Naive thymus-derived CD4-positive, alpha-beta T cell (primary cell): ENCODE measurements at regions of chr1 and their contacts with region 1.

Region 1: GRCh38 chr1:24481101-24481500 is 21.5 kb upstream of the RCAN3 start:
- DNase-seq: peak in 8 of 9 donors; percentile 50 to 80 (median 75)
- ATAC-seq: peak; percentile 84
- H3K4me3 ChIP-seq: peak overlapping the region; percentile 44
- H3K4me3 Mint-ChIP-seq: peak overlapping the region; percentile 74 to 95 (median 83)
- H3K27ac ChIP-seq: peak overlapping the region; percentile 83
- H3K27ac Mint-ChIP-seq: peak overlapping the region; percentile 93 to 99 (median 98)
- H3K4me1 ChIP-seq: peaks cover 49 to 59% of the 10 kb centered on the region in 2 donors
- H3K4me1 Mint-ChIP-seq: peaks cover 36 to 86% (median 77%) of the 10 kb centered on the region in 7 donors
- H3K27me3 ChIP-seq: no peaks in the 10 kb centered on the region
- H3K27me3 Mint-ChIP-seq: no peaks in the 10 kb centered on the region

Region 2: GRCh38 chr1:24463776-24464735 is 17.0 kb before region 1 on chr1:
- CTCF ChIA-PET with region 1: interaction called, 5 read pairs
- POLR2A ChIA-PET with region 1: interaction called, 19 read pairs
- intact Hi-C with region 1: loop called in 1 of 2 experiments (anchors 1 kb)
- DNase-seq: peak in 6 of 9 donors; percentile 12 to 37 (median 31)
- ATAC-seq: no peak
- H3K4me3 ChIP-seq: no peak overlapping the region
- H3K4me3 Mint-ChIP-seq: peak overlapping the region in 8 of 10 donors; percentile 63 to 75 (median 68)
- H3K27ac ChIP-seq: peak overlapping the region; percentile 45
- H3K27ac Mint-ChIP-seq: peak overlapping the region; percentile 58 to 95 (median 86)
- H3K4me1 ChIP-seq: peaks cover 0 to 15% of the 10 kb centered on the region in 2 donors
- H3K4me1 Mint-ChIP-seq: peaks cover 21 to 65% (median 50%) of the 10 kb centered on the region in 7 donors
- H3K27me3 ChIP-seq: no peaks in the 10 kb centered on the region
- H3K27me3 Mint-ChIP-seq: no peaks in the 10 kb centered on the region

Region 3: DNA sequence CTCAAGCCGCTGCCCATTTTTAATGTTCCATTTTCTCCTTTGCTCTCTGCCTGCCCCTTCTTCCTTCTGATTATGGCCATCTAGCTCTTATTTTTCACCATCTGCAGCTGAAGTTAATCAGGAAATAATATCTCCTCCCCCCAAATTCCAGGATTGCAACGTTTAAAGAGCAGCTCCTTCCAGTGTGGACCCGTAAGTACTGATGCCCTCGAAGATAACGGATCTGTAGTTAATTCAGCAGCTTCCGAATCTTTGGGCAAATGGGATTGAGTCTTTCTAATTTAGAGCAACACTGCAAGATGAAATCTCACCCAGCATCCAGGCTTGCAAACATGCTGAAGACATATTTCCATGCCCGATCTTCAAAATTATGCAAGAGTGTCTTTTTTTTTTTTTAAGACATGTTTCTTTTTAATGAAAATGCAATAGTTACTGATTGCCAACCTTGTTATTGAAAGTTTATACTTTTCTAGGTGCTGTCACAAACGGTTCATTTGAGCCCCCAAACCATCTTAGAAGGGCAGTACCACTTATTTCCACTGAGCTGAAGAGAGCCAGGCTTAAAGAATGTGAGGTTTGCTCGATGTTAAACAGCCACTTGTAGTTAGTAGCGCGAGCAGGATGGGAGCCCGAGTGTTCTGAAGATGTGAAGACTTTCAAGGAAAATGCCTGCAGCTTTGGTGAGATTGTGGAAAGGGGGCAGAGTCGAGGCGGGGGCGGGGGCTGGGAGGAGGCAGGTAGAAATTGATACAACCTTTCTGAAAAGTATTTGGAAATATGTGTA is 10.7 kb after region 1 on chr1:
- CTCF ChIA-PET with region 1: interaction called, 6 read pairs
- POLR2A ChIA-PET with region 1: interaction called, 929 read pairs
- intact Hi-C with region 1: loop called in 1 of 2 experiments (anchors 1 kb)
- DNase-seq: peak in 1 of 9 donors; percentile 21
- ATAC-seq: no peak
- H3K4me3 ChIP-seq: no peak overlapping the region
- H3K4me3 Mint-ChIP-seq: peak overlapping the region in 2 of 10 donors; percentile 6 to 18
- H3K27ac ChIP-seq: no peak overlapping the region
- H3K27ac Mint-ChIP-seq: peak overlapping the region in 8 of 9 donors; percentile 4 to 84 (median 48)
- H3K4me1 ChIP-seq: peaks cover 5 to 31% of the 10 kb centered on the region in 2 donors
- H3K4me1 Mint-ChIP-seq: peaks cover 23 to 53% (median 35%) of the 10 kb centered on the region in 7 donors
- H3K27me3 ChIP-seq: no peaks in the 10 kb centered on the region
- H3K27me3 Mint-ChIP-seq: peaks cover 0 to 3% (median 0%) of the 10 kb centered on the region in 5 donors

Region 4: DNA sequence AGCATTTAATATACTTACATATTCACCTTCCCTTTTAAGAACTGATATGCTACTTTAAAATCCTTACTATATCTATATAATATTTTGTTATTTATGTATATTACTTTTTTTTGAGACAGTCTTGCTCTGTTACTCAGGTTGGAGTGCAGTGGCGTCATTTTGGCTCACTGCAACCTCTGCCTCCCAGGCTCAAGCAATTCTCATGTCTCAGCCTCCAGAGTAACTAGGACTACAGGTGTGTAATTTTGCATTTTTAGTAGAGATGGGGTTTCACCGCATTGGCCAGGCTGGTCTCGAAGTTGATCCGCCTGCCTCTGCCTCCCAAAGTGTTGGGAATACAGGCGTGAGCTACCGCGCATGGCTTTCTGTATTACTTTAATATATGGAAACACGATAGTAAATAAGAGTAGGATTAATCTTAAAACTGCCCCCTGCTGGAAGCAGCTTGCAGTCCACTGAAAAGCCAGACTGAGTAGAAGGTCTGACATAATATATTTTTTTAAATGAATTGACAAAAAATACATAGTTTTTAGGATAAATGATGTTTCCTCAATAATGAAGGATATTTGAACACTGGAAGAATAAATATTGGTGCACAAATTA is 45.9 kb after region 1 on chr1:
- CTCF ChIA-PET with region 1: interaction called, 8 read pairs
- POLR2A ChIA-PET with region 1: interaction called, 39 read pairs
- intact Hi-C with region 1: loop called in 1 of 2 experiments (anchors 1 kb)
- DNase-seq: peak in 8 of 9 donors; percentile 28 to 66 (median 56)
- ATAC-seq: peak; percentile 69
- H3K4me3 ChIP-seq: no peak overlapping the region
- H3K4me3 Mint-ChIP-seq: peak overlapping the region in 7 of 10 donors; percentile 23 to 57 (median 39)
- H3K27ac ChIP-seq: peak overlapping the region; percentile 40
- H3K27ac Mint-ChIP-seq: peak overlapping the region in 8 of 9 donors; percentile 32 to 93 (median 84)
- H3K4me1 ChIP-seq: peaks cover 0 to 49% of the 10 kb centered on the region in 2 donors
- H3K4me1 Mint-ChIP-seq: peaks cover 31 to 86% (median 71%) of the 10 kb centered on the region in 7 donors
- H3K27me3 ChIP-seq: no peaks in the 10 kb centered on the region
- H3K27me3 Mint-ChIP-seq: no peaks in the 10 kb centered on the region

Region 5: GRCh38 chr1:24536391-24536840 is 55.3 kb after region 1 on chr1:
- CTCF ChIA-PET with region 1: interaction called, 3 read pairs
- POLR2A ChIA-PET with region 1: interaction called, 8 read pairs
- intact Hi-C with region 1: loop called (anchors 1 to 2 kb)
- DNase-seq: peak; percentile 41 to 92 (median 87)
- ATAC-seq: peak; percentile 90
- H3K4me3 ChIP-seq: no peak overlapping the region
- H3K4me3 Mint-ChIP-seq: peak overlapping the region; percentile 79 to 91 (median 84)
- H3K27ac ChIP-seq: peak overlapping the region; percentile 96
- H3K27ac Mint-ChIP-seq: peak overlapping the region; percentile 93 to 100 (median 99)
- H3K4me1 ChIP-seq: peaks cover 30 to 38% of the 10 kb centered on the region in 2 donors
- H3K4me1 Mint-ChIP-seq: peaks cover 29 to 90% (median 70%) of the 10 kb centered on the region in 7 donors
- H3K27me3 ChIP-seq: no peaks in the 10 kb centered on the region
- H3K27me3 Mint-ChIP-seq: no peaks in the 10 kb centered on the region

Region 6: GRCh38 chr1:24727501-24728216 is 246.6 kb after region 1 on chr1:
- CTCF ChIA-PET with region 1: no interaction called
- POLR2A ChIA-PET with region 1: no interaction called
- intact Hi-C with region 1: no loop called
- DNase-seq: no peak
- ATAC-seq: peak; percentile 83
- H3K4me3 ChIP-seq: no peak overlapping the region
- H3K4me3 Mint-ChIP-seq: peak overlapping the region in 2 of 10 donors; percentile 35 to 36
- H3K27ac ChIP-seq: no peak overlapping the region
- H3K27ac Mint-ChIP-seq: peak overlapping the region in 3 of 9 donors; percentile 21 to 48 (median 40)
- H3K4me1 ChIP-seq: no peaks in the 10 kb centered on the region
- H3K4me1 Mint-ChIP-seq: peaks cover 0 to 13% (median 3%) of the 10 kb centered on the region in 7 donors
- H3K27me3 ChIP-seq: no peaks in the 10 kb centered on the region
- H3K27me3 Mint-ChIP-seq: peaks cover 0 to 6% (median 0%) of the 10 kb centered on the region in 5 donors